Activated CD4-positive, alpha-beta T cell treated with anti-CD3 and anti-CD28 coated beads, Interleukin-2, amount 10 ng/mL, durations not matched to agents 7 days and 5 days (primary cell): ENCODE measurements at regions of chr19 and their contacts with region 1.

Region 1: DNA sequence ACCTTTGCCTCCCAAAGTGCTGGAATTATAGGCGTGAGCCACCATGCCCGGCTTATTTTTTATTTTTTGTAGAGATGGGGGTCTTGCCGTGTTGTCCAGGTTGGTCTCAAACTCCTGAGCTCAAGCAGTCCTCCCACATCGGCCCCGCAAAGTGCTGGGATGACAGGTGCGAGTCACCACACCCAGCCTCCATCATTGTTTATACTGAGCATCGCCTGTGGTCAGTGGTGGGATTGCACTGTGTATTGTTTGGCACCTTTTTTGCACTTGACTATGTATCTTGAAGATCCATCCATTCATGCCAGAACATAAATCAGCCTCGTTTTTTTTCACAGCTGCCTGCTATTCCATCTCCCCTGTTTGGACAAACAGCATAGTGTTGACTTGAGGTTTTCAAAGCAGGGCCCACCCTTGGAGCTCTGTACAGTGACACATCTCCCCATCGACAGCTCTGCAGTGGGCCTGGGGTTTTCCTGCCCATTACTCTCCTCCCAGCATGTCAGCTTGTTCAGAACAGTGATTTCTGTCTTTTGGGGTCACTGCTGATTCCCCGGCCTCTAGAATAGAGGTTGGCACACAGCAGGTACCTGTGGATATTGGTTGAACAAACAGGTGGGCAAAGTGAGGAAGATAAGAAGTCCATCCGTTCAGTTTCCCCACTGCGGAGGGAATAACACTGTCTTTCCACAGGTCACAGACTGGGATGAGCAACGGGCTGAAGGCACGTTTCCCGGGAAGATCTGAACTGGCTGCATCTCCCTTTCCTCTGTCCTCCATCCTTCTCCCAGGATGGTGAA is 8.2 kb upstream of the UPK1A start:
- DNase-seq: no peak
- H3K4me3 Mint-ChIP-seq: no peak overlapping the region
- H3K27ac Mint-ChIP-seq: no peak overlapping the region
- H3K4me1 Mint-ChIP-seq: peaks cover 4% of the 10 kb centered on the region
- H3K27me3 Mint-ChIP-seq: no peaks in the 10 kb centered on the region

Region 2: GRCh38 chr19:35623327-35624010 is 34.6 kb before region 1 on chr19:
- CTCF ChIA-PET with region 1: no interaction called
- POLR2A ChIA-PET with region 1: interaction called, 11 read pairs
- DNase-seq: no peak
- H3K4me3 Mint-ChIP-seq: no peak overlapping the region
- H3K27ac Mint-ChIP-seq: no peak overlapping the region
- H3K4me1 Mint-ChIP-seq: peaks cover 4% of the 10 kb centered on the region
- H3K27me3 Mint-ChIP-seq: no peaks in the 10 kb centered on the region

Region 3: GRCh38 chr19:35899547-35900214 is 241.6 kb after region 1 on chr19:
- CTCF ChIA-PET with region 1: no interaction called
- POLR2A ChIA-PET with region 1: no interaction called
- DNase-seq: peak; percentile 89
- H3K4me3 Mint-ChIP-seq: peak overlapping the region; percentile 94
- H3K27ac Mint-ChIP-seq: peak overlapping the region; percentile 97
- H3K4me1 Mint-ChIP-seq: peaks cover 53% of the 10 kb centered on the region
- H3K27me3 Mint-ChIP-seq: no peaks in the 10 kb centered on the region